CD4-positive, alpha-beta memory T cell (primary cell): ENCODE measurements at regions of chr2 and their contacts with region 1.

Region 1: GRCh38 chr2:239337122-239337876 is 63.5 kb downstream of the HDAC4 start:
- DNase-seq: no peak
- H3K4me3 ChIP-seq: no peak overlapping the region
- H3K4me3 Mint-ChIP-seq: no peak overlapping the region
- H3K27ac ChIP-seq: no peak overlapping the region
- H3K27ac Mint-ChIP-seq: no peak overlapping the region
- H3K4me1 ChIP-seq: peaks cover 20% of the 10 kb centered on the region
- H3K4me1 Mint-ChIP-seq: peaks cover 15 to 43% (median 28%) of the 10 kb centered on the region in 4 donors
- H3K27me3 ChIP-seq: no peaks in the 10 kb centered on the region
- H3K27me3 Mint-ChIP-seq: no peaks in the 10 kb centered on the region

Region 2: GRCh38 chr2:239348563-239349447 is 11.5 kb after region 1 on chr2:
- CTCF ChIA-PET with region 1: no interaction called
- POLR2A ChIA-PET with region 1: interaction called, 4 read pairs
- intact Hi-C with region 1: loop called (anchors 1 kb)
- DNase-seq: no peak
- H3K4me3 ChIP-seq: no peak overlapping the region
- H3K4me3 Mint-ChIP-seq: no peak overlapping the region
- H3K27ac ChIP-seq: no peak overlapping the region
- H3K27ac Mint-ChIP-seq: peak overlapping the region in 2 of 7 donors; percentile 15 to 62
- H3K4me1 ChIP-seq: peaks cover 7% of the 10 kb centered on the region
- H3K4me1 Mint-ChIP-seq: peaks cover 0 to 9% (median 0%) of the 10 kb centered on the region in 4 donors
- H3K27me3 ChIP-seq: no peaks in the 10 kb centered on the region
- H3K27me3 Mint-ChIP-seq: no peaks in the 10 kb centered on the region

Region 3: GRCh38 chr2:239778042-239778851 is 440.9 kb after region 1 on chr2:
- CTCF ChIA-PET with region 1: no interaction called
- POLR2A ChIA-PET with region 1: no interaction called
- intact Hi-C with region 1: no loop called
- DNase-seq: no peak
- H3K4me3 ChIP-seq: no peak overlapping the region
- H3K4me3 Mint-ChIP-seq: no peak overlapping the region
- H3K27ac ChIP-seq: no peak overlapping the region
- H3K27ac Mint-ChIP-seq: no peak overlapping the region
- H3K4me1 ChIP-seq: no peaks in the 10 kb centered on the region
- H3K4me1 Mint-ChIP-seq: no peaks in the 10 kb centered on the region
- H3K27me3 ChIP-seq: no peaks in the 10 kb centered on the region
- H3K27me3 Mint-ChIP-seq: peaks cover 4 to 14% of the 10 kb centered on the region in 2 donors